AG04449 (cell line): ENCODE measurements at regions of chr5 and their contacts with region 1.

Region 1: GRCh38 chr5:103041071-103041676 is 78.8 kb downstream of the GIN1 start:
- DNase-seq: no peak
- H3K4me3 ChIP-seq: no peak overlapping the region
- CTCF ChIP-seq: peak; percentile 32

Region 2: GRCh38 chr5:102536323-102536928 is 504.7 kb before region 1 on chr5:
- CTCF ChIA-PET with region 1: interaction called, 25 read pairs
- POLR2A ChIA-PET with region 1: no interaction called
- DNase-seq: no peak
- H3K4me3 ChIP-seq: no peak overlapping the region
- CTCF ChIP-seq: peak; percentile 7

Region 3: GRCh38 chr5:102583276-102584124 is 457.7 kb before region 1 on chr5:
- CTCF ChIA-PET with region 1: interaction called, 47 read pairs
- POLR2A ChIA-PET with region 1: no interaction called
- DNase-seq: no peak
- H3K4me3 ChIP-seq: no peak overlapping the region
- CTCF ChIP-seq: no peak